Breast epithelium (tissue), 4 donors: ENCODE measurements at regions of chr1 and their contacts with region 1.

Region 1: DNA sequence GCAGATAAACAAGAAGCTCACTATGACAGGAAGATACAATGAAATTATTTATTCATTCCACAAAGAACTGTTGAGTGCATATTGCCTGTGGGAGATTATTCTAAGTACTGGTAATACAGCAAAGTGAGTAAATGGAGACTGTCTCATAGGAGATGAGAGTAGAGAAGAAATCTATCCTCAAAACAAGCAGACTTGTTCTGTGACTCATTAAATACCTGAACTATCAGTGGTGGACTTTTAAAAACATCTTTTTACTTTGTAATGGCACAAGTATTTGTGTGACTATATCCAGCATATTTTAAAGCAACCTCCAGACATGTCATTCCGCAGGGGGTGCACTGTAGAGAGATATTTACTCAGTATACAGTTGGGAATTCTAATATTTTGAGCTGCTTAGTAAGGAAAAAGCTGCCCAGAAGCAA is 259.2 kb downstream of the FMN2 start:
- DNase-seq: no peak
- H3K4me3 ChIP-seq: no peak overlapping the region
- H3K27ac ChIP-seq: no peak overlapping the region
- H3K4me1 ChIP-seq: no peaks in the 10 kb centered on the region
- H3K27me3 ChIP-seq: no peaks in the 10 kb centered on the region
- CTCF ChIP-seq: no peak
- POLR2A ChIP-seq: no peak

Region 2: GRCh38 chr1:240362826-240363225 is 11.9 kb after region 1 on chr1:
- intact Hi-C with region 1: loop called (anchors 1 kb)
- DNase-seq: no peak
- H3K4me3 ChIP-seq: no peak overlapping the region
- H3K27ac ChIP-seq: no peak overlapping the region
- H3K4me1 ChIP-seq: no peaks in the 10 kb centered on the region
- H3K27me3 ChIP-seq: no peaks in the 10 kb centered on the region
- CTCF ChIP-seq: no peak
- POLR2A ChIP-seq: no peak

Region 3: GRCh38 chr1:240652549-240652948 is 301.6 kb after region 1 on chr1:
- intact Hi-C with region 1: no loop called
- DNase-seq: no peak
- H3K4me3 ChIP-seq: peak overlapping the region in 1 of 3 donors; percentile 25
- H3K27ac ChIP-seq: peak overlapping the region in 1 of 2 donors; percentile 26
- H3K4me1 ChIP-seq: no peaks in the 10 kb centered on the region
- H3K27me3 ChIP-seq: no peaks in the 10 kb centered on the region
- CTCF ChIP-seq: no peak
- POLR2A ChIP-seq: no peak